Activated CD4-positive, alpha-beta T cell treated with anti-CD3 and anti-CD28 coated beads, Interleukin-2, amount 10 ng/mL, durations not matched to agents 7 days and 5 days (primary cell): ENCODE measurements at regions of chr12 and their contacts with region 1.

Region 1: GRCh38 chr12:54005853-54006686 is 2.7 kb upstream of the HOXC8 start:
- DNase-seq: peak; percentile 84
- H3K4me3 Mint-ChIP-seq: peak overlapping the region; percentile 67
- H3K27ac Mint-ChIP-seq: no peak overlapping the region
- H3K4me1 Mint-ChIP-seq: peaks cover 25% of the 10 kb centered on the region
- H3K27me3 Mint-ChIP-seq: peaks cover 94% of the 10 kb centered on the region

Region 2: GRCh38 chr12:53967490-53967925 is 38.6 kb before region 1 on chr12:
- CTCF ChIA-PET with region 1: no interaction called
- POLR2A ChIA-PET with region 1: no interaction called
- DNase-seq: no peak
- H3K4me3 Mint-ChIP-seq: no peak overlapping the region
- H3K27ac Mint-ChIP-seq: peak overlapping the region; percentile 51
- H3K4me1 Mint-ChIP-seq: peaks cover 17% of the 10 kb centered on the region
- H3K27me3 Mint-ChIP-seq: peaks cover 98% of the 10 kb centered on the region

Region 3: GRCh38 chr12:53991077-53991460 is 15.0 kb before region 1 on chr12:
- CTCF ChIA-PET with region 1: interaction called, 14 read pairs
- POLR2A ChIA-PET with region 1: no interaction called
- DNase-seq: no peak
- H3K4me3 Mint-ChIP-seq: no peak overlapping the region
- H3K27ac Mint-ChIP-seq: no peak overlapping the region
- H3K4me1 Mint-ChIP-seq: peaks cover 41% of the 10 kb centered on the region
- H3K27me3 Mint-ChIP-seq: peaks cover 99% of the 10 kb centered on the region

Region 4: DNA sequence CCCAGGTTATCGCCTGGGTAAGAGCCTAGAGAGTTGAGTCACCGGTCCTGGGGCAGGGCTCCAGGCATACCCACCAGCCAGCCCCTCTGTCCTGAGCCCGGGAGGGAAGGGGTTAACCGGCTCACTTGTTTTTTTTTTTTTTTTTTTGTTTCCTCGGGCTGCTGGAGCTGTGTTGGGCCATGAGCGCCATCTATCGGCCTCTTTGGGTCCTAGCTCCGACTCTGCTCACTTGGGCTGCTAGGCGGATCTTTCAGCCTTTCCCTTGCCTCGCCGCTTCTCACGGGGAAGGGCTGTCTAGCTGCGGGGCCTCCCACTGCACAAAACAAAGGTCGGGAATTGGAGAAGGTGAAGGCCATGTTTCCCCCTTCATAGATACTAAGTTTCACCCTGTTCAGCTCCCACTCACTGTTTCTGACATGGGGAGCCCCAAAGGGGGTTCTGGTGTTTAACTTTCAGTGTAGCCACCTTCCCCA is 185.5 kb after region 1 on chr12:
- CTCF ChIA-PET with region 1: interaction called, 33 read pairs
- POLR2A ChIA-PET with region 1: no interaction called
- DNase-seq: peak; percentile 84
- H3K4me3 Mint-ChIP-seq: no peak overlapping the region
- H3K27ac Mint-ChIP-seq: no peak overlapping the region
- H3K4me1 Mint-ChIP-seq: peaks cover 25% of the 10 kb centered on the region
- H3K27me3 Mint-ChIP-seq: peaks cover 53% of the 10 kb centered on the region

Region 5: GRCh38 chr12:54201001-54201794 is 195.1 kb after region 1 on chr12:
- CTCF ChIA-PET with region 1: interaction called, 29 read pairs
- POLR2A ChIA-PET with region 1: no interaction called
- DNase-seq: peak; percentile 68
- H3K4me3 Mint-ChIP-seq: no peak overlapping the region
- H3K27ac Mint-ChIP-seq: no peak overlapping the region
- H3K4me1 Mint-ChIP-seq: peaks cover 1% of the 10 kb centered on the region
- H3K27me3 Mint-ChIP-seq: peaks cover 54% of the 10 kb centered on the region